ENCODE measurements at regions of chr10 and their contacts with region 1.

Region 1: DNA sequence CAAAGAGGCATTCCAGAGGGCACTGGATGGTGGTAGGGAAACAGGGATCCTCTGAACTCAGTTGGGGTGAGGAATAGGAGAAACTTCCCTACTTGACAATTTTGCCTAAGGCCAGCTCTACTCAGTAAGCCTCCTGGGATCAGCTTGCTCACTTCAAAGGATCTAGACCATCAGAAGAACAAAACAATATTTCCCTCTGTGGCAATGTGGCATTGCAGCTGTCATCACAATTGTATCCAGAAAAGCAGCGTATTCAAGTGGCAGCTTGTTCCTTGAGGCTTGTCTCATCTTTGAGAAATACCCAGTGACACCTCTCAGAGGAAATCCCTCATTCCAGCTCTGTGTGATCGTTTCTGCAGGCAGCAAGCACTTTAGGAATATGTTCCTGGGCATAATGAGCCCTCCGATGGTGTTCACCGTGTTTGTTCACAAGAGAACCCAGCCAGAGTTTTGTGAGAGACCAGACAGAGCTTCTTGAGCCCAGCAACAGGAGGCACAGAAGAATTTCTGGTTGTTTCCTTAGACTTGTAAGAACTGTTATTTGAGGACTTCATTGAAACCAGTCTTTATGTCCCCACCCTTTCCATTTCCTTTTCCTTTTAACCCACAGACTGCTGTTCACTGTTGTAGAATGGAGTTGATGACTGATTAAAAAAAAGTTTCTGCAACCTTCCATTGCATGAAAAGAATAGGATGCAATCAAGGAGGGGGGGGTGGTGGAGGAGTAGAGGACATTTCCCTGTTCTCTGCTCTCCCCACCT is 747.3 kb downstream of the LRMDA start:
- DNase-seq: no peak

Region 2: GRCh38 chr10:75651417-75651816 is 527.3 kb before region 1 on chr10:
- intact Hi-C with region 1: no loop called
- DNase-seq: no peak

Region 3: GRCh38 chr10:76071653-76072365 is 106.9 kb before region 1 on chr10:
- intact Hi-C with region 1: no loop called
- DNase-seq: no peak

Region 4: GRCh38 chr10:76195654-76196390 is 17.1 kb after region 1 on chr10:
- intact Hi-C with region 1: loop called in 1 of 2 experiments (anchors 1 kb)
- DNase-seq: no peak